ENCODE measurements at regions of chr16 and their contacts with region 1.

Region 1: GRCh38 chr16:21184834-21185233 is 26.4 kb downstream of the LDAF1 start:
- DNase-seq: peak; percentile 30
- H3K4me3 ChIP-seq: no peak overlapping the region
- H3K27ac ChIP-seq: no peak overlapping the region
- H3K4me1 ChIP-seq: peaks cover 4% of the 10 kb centered on the region
- H3K27me3 ChIP-seq: no peaks in the 10 kb centered on the region

Region 2: DNA sequence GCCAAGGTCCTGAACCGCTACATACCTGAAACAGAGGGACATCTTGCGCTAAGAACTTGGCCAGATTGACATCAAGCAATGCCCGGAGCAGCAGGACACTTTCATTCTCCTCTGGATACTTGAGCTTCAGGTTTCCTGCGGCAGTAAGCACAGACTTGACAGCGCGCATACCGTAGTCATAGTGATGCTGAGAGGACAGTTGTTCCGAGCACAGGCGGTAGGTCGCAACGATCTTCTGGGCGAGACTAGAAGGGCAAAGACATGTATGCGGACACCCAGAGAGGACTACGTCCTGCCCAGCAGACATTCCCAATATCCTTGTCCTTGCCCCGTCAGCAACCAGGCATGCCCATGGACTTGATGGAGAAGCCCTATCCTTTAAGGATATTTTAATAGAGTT is 147.1 kb before region 1 on chr16:
- in situ Hi-C with region 1: no loop called
- DNase-seq: no peak
- H3K4me3 ChIP-seq: no peak overlapping the region
- H3K27ac ChIP-seq: no peak overlapping the region
- H3K4me1 ChIP-seq: no peaks in the 10 kb centered on the region
- H3K27me3 ChIP-seq: 0 out of 2 replicates have a peak, but pooled peaks cover 5% of the 10 kb centered on the region

Region 3: DNA sequence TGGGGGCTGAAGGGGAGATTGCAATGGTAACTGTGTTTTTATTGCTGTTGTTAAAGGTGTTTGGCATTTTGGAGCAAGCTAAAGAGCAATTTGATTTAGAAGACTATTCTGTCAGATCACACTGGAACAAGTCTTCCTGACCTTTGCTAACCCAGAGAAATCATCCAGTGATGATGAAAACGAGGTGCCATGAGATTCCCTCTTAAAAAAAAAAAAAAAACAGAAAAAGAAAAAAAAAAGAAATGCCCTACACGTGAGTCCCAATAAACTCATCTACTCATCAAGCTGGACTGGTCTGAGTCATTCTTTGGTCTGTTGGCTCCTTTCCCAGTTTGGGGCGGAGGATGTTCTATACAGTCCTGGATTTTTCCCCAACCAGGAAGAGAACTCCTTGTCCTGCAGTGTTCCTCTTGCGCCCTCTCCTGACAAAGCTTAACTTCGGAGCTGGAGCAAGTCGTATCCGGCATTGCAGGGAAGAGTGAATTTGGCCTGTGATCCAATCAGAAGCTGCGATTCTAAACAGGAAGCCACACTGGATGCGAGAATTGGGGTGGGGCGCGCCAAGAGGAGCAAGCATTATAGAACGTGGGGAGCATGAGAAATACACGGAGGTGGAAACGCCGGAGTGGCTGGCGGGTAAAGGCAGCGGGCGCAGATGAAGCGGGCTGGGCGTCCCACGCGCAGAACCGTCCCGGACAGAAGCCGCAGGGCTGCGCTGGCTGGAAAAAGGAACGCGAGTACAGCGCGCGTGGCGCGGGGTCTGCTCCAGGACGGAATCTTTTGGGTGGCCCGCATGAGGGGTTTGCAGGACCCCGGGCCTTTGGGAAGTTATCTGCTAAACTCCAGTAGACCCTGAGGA is 115.7 kb after region 1 on chr16:
- in situ Hi-C with region 1: loop called (anchors 10 kb)
- DNase-seq: peak; percentile 100
- H3K4me3 ChIP-seq: peak overlapping the region; percentile 90
- H3K27ac ChIP-seq: peak overlapping the region; percentile 63
- H3K4me1 ChIP-seq: peaks cover 27% of the 10 kb centered on the region
- H3K27me3 ChIP-seq: no peaks in the 10 kb centered on the region

Region 4: GRCh38 chr16:22710326-22710725 is 1525.5 kb after region 1 on chr16:
- in situ Hi-C with region 1: no loop called
- DNase-seq: no peak
- H3K4me3 ChIP-seq: no peak overlapping the region
- H3K27ac ChIP-seq: no peak overlapping the region
- H3K4me1 ChIP-seq: no peaks in the 10 kb centered on the region
- H3K27me3 ChIP-seq: no peaks in the 10 kb centered on the region; the same call in 1 of the 2 replicates

Measured in GM23248 (cell line).